ENCODE measurements at regions of chr5 and their contacts with region 1.

Region 1: GRCh38 chr5:149537374-149537975 is 13.8 kb downstream of the CSNK1A1 start:
- DNase-seq: no peak
- ATAC-seq: no peak
- H3K4me3 ChIP-seq: no peak overlapping the region
- H3K27ac ChIP-seq: no peak overlapping the region
- H3K4me1 ChIP-seq: peaks cover 9 to 96% (median 77%) of the 10 kb centered on the region in 12 donors
- H3K27me3 ChIP-seq: no peaks in the 10 kb centered on the region
- CTCF ChIP-seq: no peak
- POLR2A ChIP-seq: no peak

Region 2: DNA sequence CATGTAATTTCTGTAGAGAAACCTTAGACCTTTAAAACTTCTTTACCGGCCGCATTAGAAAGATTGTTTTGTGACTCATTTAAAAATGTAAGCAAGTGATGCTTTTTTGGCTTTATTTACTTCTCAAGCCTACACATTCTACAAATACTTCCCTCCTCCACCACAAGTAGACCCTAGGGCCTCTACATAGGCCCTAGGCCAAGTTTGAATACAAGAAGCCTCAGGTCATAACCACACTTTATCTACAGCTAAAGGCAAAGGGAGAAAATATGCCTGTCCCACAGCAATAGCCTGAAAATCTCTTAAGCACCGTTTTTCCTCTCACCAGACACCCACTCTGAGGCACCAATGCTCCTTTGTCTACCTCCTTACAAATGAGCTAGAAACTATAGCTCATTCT is 40.1 kb before region 1 on chr5:
- intact Hi-C with region 1: loop called in 5 of 10 experiments (anchors 5 to 10 kb)
- DNase-seq: no peak
- ATAC-seq: peak in 3 of 4 donors; percentile 29 to 58 (median 52)
- H3K4me3 ChIP-seq: no peak overlapping the region
- H3K27ac ChIP-seq: peak overlapping the region in 10 of 12 donors; percentile 8 to 70 (median 49)
- H3K4me1 ChIP-seq: peaks cover 0 to 27% (median 11%) of the 10 kb centered on the region in 12 donors
- H3K27me3 ChIP-seq: no peaks in the 10 kb centered on the region
- CTCF ChIP-seq: no peak
- POLR2A ChIP-seq: no peak

Measured in heart left ventricle (tissue), 16 donors.